Activated T-helper 2 cell treated with anti-CD3 and anti-CD28 coated beads, Interferon-gamma antibody, Interleukin-2, Interleukin-4, amounts not matched to agents 10 μg/mL and 5 μg/mL and 100 μg/mL, durations not matched to agents 14 hours and 24 hours and 36 hours (primary cell): ENCODE measurements at regions of chr21 and their contacts with region 1.

Region 1: GRCh38 chr21:32770871-32771523 is 558 bp downstream of the PAXBP1 start:
- DNase-seq: no peak
- H3K4me3 Mint-ChIP-seq: peak overlapping the region; percentile 99
- H3K27ac Mint-ChIP-seq: peak overlapping the region; percentile 91
- H3K4me1 Mint-ChIP-seq: peaks cover 49% of the 10 kb centered on the region
- H3K27me3 Mint-ChIP-seq: no peaks in the 10 kb centered on the region

Region 2: GRCh38 chr21:32494934-32495703 is 275.9 kb before region 1 on chr21:
- intact Hi-C with region 1: loop called (anchors 1 kb)
- DNase-seq: no peak
- H3K4me3 Mint-ChIP-seq: no peak overlapping the region
- H3K27ac Mint-ChIP-seq: no peak overlapping the region
- H3K4me1 Mint-ChIP-seq: no peaks in the 10 kb centered on the region
- H3K27me3 Mint-ChIP-seq: no peaks in the 10 kb centered on the region

Region 3: DNA sequence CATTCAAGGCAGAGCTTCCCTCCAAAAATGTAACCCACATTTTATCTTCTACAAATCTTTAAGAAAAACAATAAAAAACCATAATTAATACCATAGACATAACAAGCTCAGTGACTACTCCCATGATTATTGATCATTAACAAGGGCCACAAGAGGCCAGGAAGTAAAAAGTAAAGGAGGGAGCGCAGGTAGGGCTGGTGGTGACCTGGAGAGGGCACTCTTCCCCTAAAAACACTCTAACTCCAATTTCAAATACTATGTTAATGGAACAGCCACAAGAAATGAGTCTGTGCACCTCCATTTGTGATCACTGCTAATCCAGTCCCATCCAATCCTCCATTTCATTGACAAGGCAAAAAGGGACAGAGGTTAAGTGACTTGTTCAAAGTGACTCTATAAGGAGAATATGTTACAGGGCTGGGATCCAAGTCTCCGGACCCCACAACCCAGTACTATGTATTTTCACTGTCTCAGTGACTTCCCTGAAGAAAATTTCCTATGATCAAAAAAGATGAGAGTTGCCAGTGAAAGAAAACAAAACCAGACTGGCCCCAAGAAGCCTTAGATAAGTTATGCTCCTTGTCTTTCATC is 117.6 kb before region 1 on chr21:
- intact Hi-C with region 1: loop called (anchors 5 kb)
- DNase-seq: no peak
- H3K4me3 Mint-ChIP-seq: no peak overlapping the region
- H3K27ac Mint-ChIP-seq: no peak overlapping the region
- H3K4me1 Mint-ChIP-seq: peaks cover 24% of the 10 kb centered on the region
- H3K27me3 Mint-ChIP-seq: no peaks in the 10 kb centered on the region

Region 4: GRCh38 chr21:32807717-32808380 is 36.9 kb after region 1 on chr21:
- intact Hi-C with region 1: loop called (anchors 2 kb)
- DNase-seq: no peak
- H3K4me3 Mint-ChIP-seq: no peak overlapping the region
- H3K27ac Mint-ChIP-seq: no peak overlapping the region
- H3K4me1 Mint-ChIP-seq: peaks cover 28% of the 10 kb centered on the region
- H3K27me3 Mint-ChIP-seq: no peaks in the 10 kb centered on the region

Region 5: GRCh38 chr21:32929633-32930038 is 158.6 kb after region 1 on chr21:
- intact Hi-C with region 1: loop called (anchors 5 kb)
- DNase-seq: no peak
- H3K4me3 Mint-ChIP-seq: no peak overlapping the region
- H3K27ac Mint-ChIP-seq: no peak overlapping the region
- H3K4me1 Mint-ChIP-seq: peaks cover 31% of the 10 kb centered on the region
- H3K27me3 Mint-ChIP-seq: no peaks in the 10 kb centered on the region

Region 6: GRCh38 chr21:33641336-33642026 is 870.5 kb after region 1 on chr21 and contains the start of gene CRYZL1:
- intact Hi-C with region 1: loop called (anchors 5 kb)
- DNase-seq: peak; percentile 100
- H3K4me3 Mint-ChIP-seq: peak within 1 kb of the TSS; percentile 94
- H3K27ac Mint-ChIP-seq: peak within 1 kb of the TSS; percentile 95
- H3K4me1 Mint-ChIP-seq: peaks cover 13% of the 10 kb centered on the region
- H3K27me3 Mint-ChIP-seq: peaks cover 22% of the 10 kb centered on the region
- total RNA-seq, gene CRYZL1: 30.4 and 36.5 TPM in 2 replicates